Cardiac septum (tissue), 1 donor: ENCODE measurements at regions of chr9 and their contacts with region 1.

Region 1: DNA sequence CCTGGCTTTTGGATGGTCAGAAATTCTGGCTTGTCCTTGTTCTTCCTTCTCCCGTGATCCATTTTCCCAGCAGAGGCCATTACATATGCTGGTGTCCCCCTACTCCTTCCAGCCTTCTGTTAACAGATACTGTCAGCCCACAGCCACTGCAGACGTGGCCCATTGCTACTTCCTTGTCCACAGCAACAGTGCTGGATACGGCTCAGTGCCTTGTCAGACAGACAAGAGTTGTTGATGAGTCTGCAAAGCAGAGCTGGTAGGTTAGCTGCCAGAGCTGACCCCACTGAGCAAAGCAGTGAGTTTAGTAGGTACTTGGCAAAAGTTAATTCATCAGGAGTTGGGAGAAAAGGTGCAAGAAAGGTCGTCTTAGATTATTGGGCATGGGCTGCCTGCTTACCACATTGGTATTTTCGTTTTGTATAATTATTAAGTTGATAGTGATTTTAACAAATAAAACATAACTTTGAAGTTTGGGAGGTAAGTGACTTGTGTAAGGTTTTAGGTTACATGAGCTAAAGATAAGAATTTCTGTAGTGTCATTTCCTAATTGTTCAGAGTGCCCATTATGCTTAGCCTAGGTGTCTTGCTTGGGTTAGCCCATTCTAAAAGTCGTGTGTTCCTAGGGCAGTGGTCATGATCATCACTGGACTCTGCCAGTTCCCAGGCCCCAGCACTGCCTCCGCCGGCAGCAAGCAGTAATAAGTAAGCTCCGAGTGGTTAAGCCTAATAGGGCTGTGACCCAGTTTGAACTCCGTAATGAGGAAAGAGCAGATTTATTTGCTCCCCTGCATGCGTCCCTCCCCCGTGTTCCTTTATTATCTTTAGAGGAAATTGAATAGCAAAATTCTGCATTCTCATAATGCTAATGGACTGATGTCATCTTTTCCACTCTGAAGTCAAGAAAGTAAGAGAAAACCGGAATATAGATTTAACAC is 292.0 kb downstream of the FANCC start:
- DNase-seq: no peak

Region 2: DNA sequence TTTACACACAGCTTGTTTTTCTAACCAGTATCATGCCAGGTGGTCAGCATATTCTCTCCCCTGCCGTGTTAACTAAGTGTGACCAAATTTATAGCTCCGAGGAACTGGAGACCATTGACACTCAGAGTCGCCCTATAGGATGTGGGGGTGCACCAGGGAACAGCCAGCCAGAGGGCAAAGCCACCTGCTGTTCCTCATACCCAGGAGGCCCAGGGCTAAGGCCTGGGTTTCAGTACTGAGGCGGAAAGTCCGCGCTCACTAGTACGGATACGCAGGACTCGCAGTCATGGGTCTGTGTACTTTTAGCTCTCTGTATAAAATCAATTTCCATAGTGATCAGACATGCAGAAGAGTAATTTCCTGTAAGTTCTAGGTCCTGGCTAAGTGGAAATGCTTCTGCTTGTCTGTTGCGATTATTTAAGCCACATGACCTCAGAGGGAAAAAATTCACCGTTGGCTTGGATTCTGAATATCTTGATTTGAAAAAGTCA is 52.0 kb before region 1 on chr9:
- intact Hi-C with region 1: no loop called
- DNase-seq: no peak

Region 3: GRCh38 chr9:95055851-95056551 is 30.5 kb after region 1 on chr9:
- intact Hi-C with region 1: loop called (anchors 5 kb)
- DNase-seq: peak; percentile 78

Region 4: DNA sequence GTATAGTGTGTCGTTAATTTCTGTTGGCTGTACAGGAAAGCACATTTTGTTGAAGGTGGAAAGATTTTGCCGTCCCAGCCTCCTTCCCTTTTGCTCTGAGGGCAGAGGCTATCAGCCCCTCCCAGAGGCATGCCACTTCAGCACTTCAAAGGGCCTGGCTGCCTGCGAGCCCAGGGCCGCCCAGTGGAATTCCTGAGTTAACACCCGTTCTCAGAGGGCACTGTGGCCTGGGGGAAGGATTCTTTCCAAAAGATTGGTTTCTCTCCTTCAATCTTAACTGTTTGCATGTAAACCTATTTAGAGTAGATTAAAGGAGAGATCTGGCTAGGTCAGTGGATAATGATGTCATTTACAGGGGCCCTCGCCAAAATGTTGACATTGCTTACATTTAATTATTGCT is 53.5 kb after region 1 on chr9:
- intact Hi-C with region 1: loop called (anchors 5 kb)
- DNase-seq: peak; percentile 72